Right cardiac atrium (tissue), 5 donors: ENCODE measurements at regions of chr14 and their contacts with region 1.

Region 1: DNA sequence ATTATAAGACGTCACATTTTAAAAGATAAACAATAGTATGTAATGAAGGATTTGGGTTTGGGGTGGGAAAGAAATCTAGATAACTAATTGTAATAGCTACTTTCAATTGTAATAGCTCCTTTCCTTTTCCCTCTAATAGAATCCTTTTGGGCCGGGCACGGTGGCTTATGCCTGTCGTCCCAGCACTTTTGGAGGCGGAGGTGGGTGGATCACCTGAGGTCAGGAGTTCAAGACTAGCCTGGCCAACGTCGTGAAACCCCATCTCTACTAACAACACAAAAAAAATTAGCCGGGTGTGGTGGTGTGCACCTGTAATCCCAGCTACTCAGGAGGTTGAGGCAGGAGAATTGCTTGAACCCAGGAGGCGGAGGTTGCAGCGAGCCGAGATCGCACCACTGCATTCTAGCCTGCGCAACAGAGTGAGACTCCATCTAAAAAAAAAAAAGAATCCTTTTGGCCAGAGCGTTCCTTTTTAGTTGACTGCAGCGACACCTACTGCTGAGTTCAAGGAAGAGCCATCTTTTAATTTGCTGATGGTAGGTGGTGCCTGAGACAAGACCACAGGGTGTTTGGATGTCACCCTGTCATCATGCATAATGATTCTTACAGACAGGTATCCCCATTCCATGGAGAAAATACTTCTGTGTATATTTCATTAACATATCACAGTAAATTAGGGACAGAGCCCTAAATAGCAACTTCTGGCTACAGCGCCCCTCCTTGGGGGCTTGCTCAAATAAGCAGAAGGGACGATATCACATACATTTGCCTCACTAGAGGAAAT is 79.5 kb downstream of the ARMH4 start:
- DNase-seq: peak in 2 of 3 donors; percentile 28 to 62
- ATAC-seq: peak; percentile 77 to 86
- H3K4me3 ChIP-seq: no peak overlapping the region
- H3K27ac ChIP-seq: no peak overlapping the region
- H3K4me1 ChIP-seq: no peaks in the 10 kb centered on the region
- H3K27me3 ChIP-seq: no peaks in the 10 kb centered on the region

Region 2: DNA sequence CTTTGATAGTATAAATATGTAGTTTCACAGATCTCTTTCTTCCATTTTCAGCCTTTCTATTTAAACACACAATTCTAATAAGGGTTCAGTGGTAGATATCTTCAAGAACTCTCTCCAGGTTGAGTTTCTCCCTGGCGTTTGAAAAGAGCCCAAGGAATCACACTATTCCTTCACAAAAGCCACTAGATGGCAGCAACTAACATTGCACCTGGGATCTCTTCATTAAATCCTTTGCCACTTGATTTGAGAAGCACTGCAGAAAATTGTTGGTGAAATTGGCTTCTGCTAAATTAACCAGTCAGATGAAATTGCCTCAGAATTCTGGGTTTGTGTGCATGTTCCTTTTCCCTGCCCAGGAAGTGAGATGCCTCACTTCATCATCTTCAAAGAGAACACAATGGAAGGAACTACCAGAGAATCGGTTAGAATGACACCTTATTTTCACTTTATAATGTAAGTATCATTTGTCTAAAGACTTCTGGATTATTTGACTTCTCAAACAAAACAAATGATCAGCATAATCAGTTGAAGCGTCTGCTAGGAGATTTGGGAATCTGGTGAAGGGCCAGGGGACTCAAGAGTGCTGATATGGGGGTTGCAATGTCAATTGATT is 585.6 kb before region 1 on chr14:
- intact Hi-C with region 1: loop called (anchors 5 kb)
- DNase-seq: no peak
- ATAC-seq: peak in 1 of 2 donors; percentile 60
- H3K4me3 ChIP-seq: no peak overlapping the region
- H3K27ac ChIP-seq: no peak overlapping the region
- H3K4me1 ChIP-seq: no peaks in the 10 kb centered on the region
- H3K27me3 ChIP-seq: no peaks in the 10 kb centered on the region

Region 3: GRCh38 chr14:57493467-57494181 is 578.9 kb before region 1 on chr14 and contains the start of gene CCDC198:
- intact Hi-C with region 1: loop called (anchors 5 kb)
- DNase-seq: no peak
- ATAC-seq: no peak
- H3K4me3 ChIP-seq: no peak within 1 kb of the TSS
- H3K27ac ChIP-seq: no peak within 1 kb of the TSS
- H3K4me1 ChIP-seq: no peaks in the 10 kb centered on the region
- H3K27me3 ChIP-seq: no peaks in the 10 kb centered on the region
- total RNA-seq, gene CCDC198: not detected

Region 4: GRCh38 chr14:57999471-57999870 is 73.0 kb before region 1 on chr14:
- intact Hi-C with region 1: no loop called
- DNase-seq: no peak
- ATAC-seq: no peak
- H3K4me3 ChIP-seq: no peak overlapping the region
- H3K27ac ChIP-seq: no peak overlapping the region
- H3K4me1 ChIP-seq: no peaks in the 10 kb centered on the region
- H3K27me3 ChIP-seq: no peaks in the 10 kb centered on the region

Region 5: DNA sequence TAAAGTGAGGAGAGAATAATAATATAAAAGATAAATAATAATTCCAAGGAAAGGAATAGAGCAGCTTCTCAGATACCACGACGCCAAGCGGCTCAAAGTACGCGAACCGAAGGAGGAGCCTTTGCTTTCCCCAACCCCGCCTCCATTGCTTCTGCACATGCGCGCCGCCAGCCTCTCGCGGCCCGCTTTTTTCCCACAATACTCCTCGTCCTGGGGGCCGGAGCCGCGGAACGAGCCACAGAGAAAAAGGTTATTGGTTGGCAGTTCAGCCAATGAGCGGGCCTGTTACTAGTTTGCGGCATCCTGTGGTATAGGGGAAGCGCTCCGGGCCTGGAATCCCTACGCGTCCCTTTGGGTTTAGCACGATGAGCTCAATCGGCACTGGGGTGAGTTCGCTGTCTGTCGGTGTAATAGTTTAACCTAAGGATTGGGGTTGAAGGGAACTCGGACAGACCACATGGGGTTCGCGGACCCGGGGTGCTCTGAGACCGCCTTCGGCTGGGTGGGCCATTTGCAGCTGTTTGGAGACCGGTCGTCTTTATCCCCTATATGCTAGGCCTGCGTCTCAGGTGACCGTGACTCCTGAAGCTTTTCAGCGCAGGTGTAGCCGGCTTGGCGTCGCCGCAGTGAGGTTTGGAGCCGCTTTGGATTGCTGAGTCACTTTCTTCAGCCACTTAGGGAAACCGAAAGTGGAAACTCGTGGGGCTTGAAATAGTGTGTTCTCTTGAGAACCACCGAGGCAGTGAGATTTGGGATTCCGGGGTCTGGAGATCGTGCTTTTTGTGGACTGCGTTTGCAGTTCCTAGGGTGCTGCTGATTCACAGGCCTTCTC is 172.3 kb after region 1 on chr14 and contains the start of gene PSMA3:
- intact Hi-C with region 1: no loop called
- DNase-seq: peak; percentile 98 to 99 (median 98)
- ATAC-seq: peak; percentile 97 to 98
- H3K4me3 ChIP-seq: peak within 1 kb of the TSS; percentile 84
- H3K27ac ChIP-seq: peak within 1 kb of the TSS; percentile 94
- H3K4me1 ChIP-seq: no peaks in the 10 kb centered on the region
- H3K27me3 ChIP-seq: no peaks in the 10 kb centered on the region
- total RNA-seq, gene PSMA3: 112 to 147 (median 124) TPM